Mammary epithelial cell (primary cell): ENCODE measurements at regions of chrX and their contacts with region 1.

Region 1: DNA sequence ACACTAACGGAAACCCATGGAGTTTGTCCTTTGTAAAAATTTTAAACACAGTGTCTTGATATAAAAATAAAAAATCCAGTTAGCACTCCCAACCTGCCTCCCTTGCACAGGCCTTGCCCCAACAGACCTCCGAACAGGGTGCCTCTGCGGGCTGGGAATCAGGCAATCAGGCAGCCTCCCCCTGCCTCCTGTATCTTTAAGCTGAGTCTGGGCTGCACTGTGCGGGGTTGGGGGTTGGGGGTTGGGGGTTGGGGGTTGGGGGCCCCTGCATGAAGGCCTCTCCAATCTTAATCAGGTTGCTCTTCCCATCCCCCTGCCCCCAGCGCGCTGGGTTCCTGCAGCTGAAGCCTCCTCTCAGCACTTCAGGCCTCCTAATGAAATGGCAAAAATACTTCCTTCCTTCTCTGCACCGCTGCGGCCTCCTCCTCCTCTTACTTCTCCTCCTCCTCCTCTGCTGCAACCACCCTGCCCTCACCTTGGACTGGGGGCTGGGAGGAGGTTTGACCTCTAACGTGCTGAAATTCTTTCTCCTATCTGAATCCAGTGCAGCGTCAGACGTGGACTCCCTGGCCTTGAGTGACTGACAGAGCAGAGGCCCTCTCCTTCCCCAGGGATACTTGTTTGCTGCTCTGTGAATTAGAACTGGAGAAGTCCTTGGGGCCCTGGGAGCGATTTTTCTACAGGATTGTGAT is 26.6 kb downstream of the NLGN3 start:
- DNase-seq: no peak
- H3K4me3 ChIP-seq: no peak overlapping the region
- H3K27ac ChIP-seq: no peak overlapping the region
- H3K4me1 ChIP-seq: no peaks in the 10 kb centered on the region
- H3K27me3 ChIP-seq: no peaks in the 10 kb centered on the region
- CTCF ChIP-seq: no peak

Region 2: DNA sequence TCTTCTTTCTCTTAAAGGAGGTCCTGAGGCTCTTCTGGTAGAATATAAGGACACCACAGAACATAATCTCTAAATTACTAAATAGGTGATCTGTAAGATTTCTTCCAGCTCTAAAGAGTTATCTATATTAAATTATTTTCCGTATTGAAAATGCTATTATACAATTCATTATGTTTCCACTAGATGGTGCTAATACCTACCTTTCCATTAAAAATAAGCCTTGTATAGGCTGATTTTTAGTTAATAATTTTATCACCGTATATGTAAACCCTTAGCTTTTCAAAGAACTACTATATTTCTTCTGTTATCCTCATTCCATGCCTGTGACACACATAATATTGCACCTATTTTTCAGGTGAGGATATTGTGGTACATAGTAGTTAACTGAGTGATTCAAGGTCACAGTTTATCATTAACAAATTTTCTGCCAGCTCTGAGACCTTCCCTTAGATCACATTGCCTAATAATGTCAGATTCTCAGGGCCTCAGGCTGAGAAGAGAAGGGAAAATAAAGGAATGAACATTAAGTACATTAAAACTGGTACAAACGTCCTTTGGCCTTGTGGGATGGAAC is 401.5 kb before region 1 on chrX:
- CTCF ChIA-PET with region 1: no interaction called
- dilution Hi-C with region 1: no loop called
- in situ Hi-C with region 1: loop called (anchors 25 kb)
- intact Hi-C with region 1: no loop called
- DNase-seq: no peak
- H3K4me3 ChIP-seq: no peak overlapping the region
- H3K27ac ChIP-seq: no peak overlapping the region
- H3K4me1 ChIP-seq: no peaks in the 10 kb centered on the region
- H3K27me3 ChIP-seq: no peaks in the 10 kb centered on the region
- CTCF ChIP-seq: peak; percentile 37 to 43

Region 3: GRCh38 chrX:70998411-70999027 is 172.7 kb before region 1 on chrX:
- CTCF ChIA-PET with region 1: no interaction called
- dilution Hi-C with region 1: no loop called
- in situ Hi-C with region 1: loop called (anchors 25 kb)
- intact Hi-C with region 1: no loop called
- DNase-seq: peak; percentile 84
- H3K4me3 ChIP-seq: no peak overlapping the region
- H3K27ac ChIP-seq: no peak overlapping the region
- H3K4me1 ChIP-seq: no peaks in the 10 kb centered on the region
- H3K27me3 ChIP-seq: no peaks in the 10 kb centered on the region
- CTCF ChIP-seq: peak; percentile 21 to 48